ENCODE measurements at regions of chr4 and their contacts with region 1.

Region 1: DNA sequence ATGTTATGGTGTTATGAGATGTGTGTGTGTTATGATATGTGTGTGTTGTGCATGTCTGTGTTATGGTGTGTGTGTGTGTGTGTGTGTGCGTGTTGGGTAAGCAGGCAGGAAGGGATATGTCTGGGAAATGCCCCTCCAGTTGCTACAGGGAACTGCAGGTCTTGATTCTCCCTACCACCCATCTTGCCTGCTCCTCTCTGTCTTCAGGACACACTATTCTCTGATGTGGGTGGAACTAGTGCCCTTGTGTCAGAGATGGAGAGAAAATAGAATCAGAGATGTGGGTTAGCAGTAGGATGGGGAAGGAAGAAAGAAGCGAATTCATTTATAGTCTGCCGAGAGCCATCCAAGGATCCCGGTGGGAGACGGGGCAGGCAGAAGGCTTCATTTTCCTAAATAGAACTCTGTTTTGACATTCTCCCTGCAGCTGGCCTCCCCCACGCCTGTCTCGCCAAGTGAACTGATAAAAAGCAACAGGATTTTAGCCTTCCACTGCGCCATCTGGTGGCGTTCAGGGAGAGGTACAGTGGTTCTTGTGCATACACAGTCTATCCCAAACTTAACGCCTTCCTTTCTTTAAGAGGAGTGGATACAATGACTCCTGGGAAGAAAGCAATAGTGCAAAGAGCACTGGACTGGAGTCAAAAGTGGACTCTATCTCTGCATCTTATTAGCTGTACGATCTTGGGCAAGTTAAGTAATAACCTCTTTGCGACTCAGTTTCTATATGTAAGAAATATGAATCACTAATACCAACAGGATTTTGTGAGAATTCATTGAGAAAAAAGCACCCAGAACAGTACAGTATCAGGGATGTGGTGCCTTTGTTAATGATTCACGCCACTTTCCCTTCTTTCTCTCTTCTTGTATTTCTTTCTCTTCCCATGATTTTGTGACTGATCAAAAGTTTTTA is 14.1 kb upstream of the MGST2 start:
- DNase-seq: peak; percentile 67 to 91 (median 72)
- ATAC-seq: peak; percentile 91
- H3K4me3 ChIP-seq: no peak overlapping the region
- H3K27ac ChIP-seq: no peak overlapping the region
- H3K4me1 ChIP-seq: peaks cover 0 to 3% of the 10 kb centered on the region in 2 experiments; a peak in 2 of 5 replicates
- H3K27me3 ChIP-seq: peaks cover 7 to 18% of the 10 kb centered on the region in 2 experiments; a peak in 4 of 5 replicates
- CTCF ChIP-seq: peak; percentile 87 to 93 (median 89)
- EP300 ChIP-seq: 0 out of 2 replicates have a peak, but pooled peaks have one; percentile 13
- POLR2A ChIP-seq: no peak
- RAD21 ChIP-seq: peak; percentile 80 to 85

Region 2: DNA sequence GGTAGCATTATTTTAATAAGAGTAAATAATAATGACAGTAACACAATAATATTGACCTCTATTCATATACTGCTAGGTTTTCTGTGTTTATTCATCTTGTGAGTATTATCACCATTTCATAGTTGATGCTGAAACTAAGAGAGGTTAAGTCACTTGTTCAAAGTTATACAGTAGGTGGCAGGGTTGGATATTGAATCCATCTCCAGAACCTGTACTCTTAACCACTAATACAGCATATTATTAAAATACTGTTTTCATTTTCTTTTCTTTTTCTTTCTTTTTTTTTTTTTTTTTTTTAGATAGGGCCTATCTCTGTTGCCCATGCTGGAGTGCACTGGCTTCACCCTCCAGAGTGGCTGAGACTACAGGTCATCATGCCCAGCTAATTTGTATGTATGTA is 467.4 kb before region 1 on chr4:
- CTCF ChIA-PET with region 1: no interaction called
- POLR2A ChIA-PET with region 1: no interaction called
- in situ Hi-C with region 1: no loop called
- intact Hi-C with region 1: loop called (anchors 10 kb)
- DNase-seq: no peak
- ATAC-seq: peak; percentile 46
- H3K4me3 ChIP-seq: no peak overlapping the region
- H3K27ac ChIP-seq: no peak overlapping the region
- H3K4me1 ChIP-seq: peaks cover 5 to 14% of the 10 kb centered on the region in 2 experiments; a peak in 3 of 5 replicates
- H3K27me3 ChIP-seq: no peaks in the 10 kb centered on the region
- CTCF ChIP-seq: peak in 2 of 3 experiments; percentile 36 to 66; a peak in 3 of 6 replicates
- EP300 ChIP-seq: no peak
- POLR2A ChIP-seq: no peak
- RAD21 ChIP-seq: peak; percentile 59 to 78

Region 3: DNA sequence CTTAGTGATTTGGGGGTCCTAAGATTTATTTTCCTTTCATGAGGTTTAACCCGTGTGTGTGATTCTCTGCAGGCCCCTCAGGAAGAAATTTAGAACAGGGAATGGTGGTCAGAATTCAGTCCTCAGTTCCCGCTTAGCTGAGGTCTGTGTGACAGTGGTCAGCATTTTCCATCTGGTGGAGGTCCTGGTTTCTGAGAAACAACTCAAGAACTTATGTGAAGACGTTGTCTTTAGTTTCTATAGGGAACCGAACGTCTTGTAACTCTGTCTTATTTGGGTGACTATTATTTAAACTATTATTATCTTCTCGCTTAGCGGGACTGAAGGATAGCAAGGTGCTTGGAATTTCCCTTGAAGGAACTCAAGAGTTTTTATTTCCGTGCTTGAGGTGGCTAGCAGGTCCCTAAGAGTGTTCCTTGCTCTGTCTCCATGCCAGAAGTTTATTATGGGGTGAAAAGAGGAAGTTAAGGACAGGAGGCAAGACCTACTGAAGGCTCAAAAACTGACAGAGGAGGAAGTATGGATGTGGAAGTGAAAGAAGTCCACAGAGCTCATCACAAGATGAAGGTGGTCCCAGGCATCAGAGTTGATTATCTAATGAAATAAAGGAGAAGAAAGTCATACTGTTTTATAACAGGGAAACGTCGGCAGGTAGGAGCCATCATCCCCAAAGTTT is 23.5 kb after region 1 on chr4:
- CTCF ChIA-PET with region 1: no interaction called
- POLR2A ChIA-PET with region 1: no interaction called
- in situ Hi-C with region 1: no loop called
- intact Hi-C with region 1: no loop called
- DNase-seq: peak in 1 of 4 experiments; percentile 11
- ATAC-seq: peak; percentile 67; the same call in 2 of the 3 replicates
- H3K4me3 ChIP-seq: no peak overlapping the region
- H3K27ac ChIP-seq: no peak overlapping the region
- H3K4me1 ChIP-seq: 0 out of 5 replicates have a peak, but pooled peaks cover under 1 to 3% of the 10 kb centered on the region in 2 experiments
- H3K27me3 ChIP-seq: no peaks in the 10 kb centered on the region
- CTCF ChIP-seq: no peak
- EP300 ChIP-seq: no peak
- POLR2A ChIP-seq: no peak
- RAD21 ChIP-seq: no peak

Measured in K562 (cell line).